HAP-1 (cell line): ENCODE measurements at regions of chr11 and their contacts with region 1.

Region 1: GRCh38 chr11:46889689-46890475 is 28.5 kb downstream of the LRP4 start:
- DNase-seq: peak; percentile 54 to 85
- H3K4me3 ChIP-seq: no peak overlapping the region
- H3K4me1 ChIP-seq: no peaks in the 10 kb centered on the region
- H3K27me3 ChIP-seq: no peaks in the 10 kb centered on the region

Region 2: GRCh38 chr11:47161134-47161854 is 271.4 kb after region 1 on chr11:
- in situ Hi-C with region 1: loop called (anchors 5 kb)
- DNase-seq: peak; percentile 57 to 81
- H3K4me3 ChIP-seq: no peak overlapping the region
- H3K4me1 ChIP-seq: no peaks in the 10 kb centered on the region
- H3K27me3 ChIP-seq: no peaks in the 10 kb centered on the region